ENCODE measurements at regions of chr5 and their contacts with region 1.

Region 1: DNA sequence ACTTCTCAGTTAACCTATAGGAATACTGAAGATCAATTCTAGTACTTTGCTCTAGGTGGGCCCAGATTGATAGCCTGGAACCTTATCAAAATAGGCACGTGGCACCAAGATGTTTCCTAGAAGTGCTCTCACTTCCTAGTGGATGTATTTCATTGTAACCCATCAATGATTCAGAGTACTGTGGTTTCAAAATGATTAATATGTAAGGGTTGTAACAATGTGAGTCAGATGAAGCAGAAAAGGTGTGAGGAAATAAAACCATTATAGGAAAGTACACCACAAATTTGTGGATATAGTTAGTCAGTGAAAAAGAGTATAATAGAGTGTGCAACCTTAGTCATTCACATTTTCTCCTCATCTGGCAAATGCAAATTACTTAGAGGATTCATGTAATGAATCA is 177.3 kb upstream of the FST start:
- DNase-seq: no peak
- H3K4me3 Mint-ChIP-seq: no peak overlapping the region
- H3K27ac Mint-ChIP-seq: no peak overlapping the region
- H3K4me1 Mint-ChIP-seq: peaks cover 9% of the 10 kb centered on the region
- H3K27me3 Mint-ChIP-seq: no peaks in the 10 kb centered on the region

Region 2: GRCh38 chr5:53335115-53335514 is 32.0 kb after region 1 on chr5:
- intact Hi-C with region 1: no loop called
- DNase-seq: no peak
- H3K4me3 Mint-ChIP-seq: no peak overlapping the region
- H3K27ac Mint-ChIP-seq: no peak overlapping the region
- H3K4me1 Mint-ChIP-seq: no peaks in the 10 kb centered on the region
- H3K27me3 Mint-ChIP-seq: peaks cover 2% of the 10 kb centered on the region

Region 3: GRCh38 chr5:53366245-53366644 is 63.1 kb after region 1 on chr5:
- intact Hi-C with region 1: loop called (anchors 1 kb)
- DNase-seq: no peak
- H3K4me3 Mint-ChIP-seq: no peak overlapping the region
- H3K27ac Mint-ChIP-seq: no peak overlapping the region
- H3K4me1 Mint-ChIP-seq: no peaks in the 10 kb centered on the region
- H3K27me3 Mint-ChIP-seq: no peaks in the 10 kb centered on the region